Heart right ventricle (tissue), 16 donors: ENCODE measurements at regions of chr4 and their contacts with region 1.

Region 1: GRCh38 chr4:140427106-140427961 is at the start of gene CLGN:
- DNase-seq: peak; percentile 71 to 82
- ATAC-seq: peak; percentile 90 to 97 (median 95)
- H3K4me3 ChIP-seq: peak within 1 kb of the TSS; percentile 57 to 84 (median 73)
- H3K27ac ChIP-seq: peak within 1 kb of the TSS; percentile 53 to 91 (median 85)
- H3K4me1 ChIP-seq: peaks cover 0 to 22% (median 6%) of the 10 kb centered on the region in 9 donors
- H3K27me3 ChIP-seq: peaks cover 0 to 14% (median 3%) of the 10 kb centered on the region in 7 donors
- CTCF ChIP-seq: peak in 8 of 9 donors; percentile 43 to 70 (median 58)
- total RNA-seq, gene CLGN: 51.3 to 125 (median 71.6) TPM

Region 2: DNA sequence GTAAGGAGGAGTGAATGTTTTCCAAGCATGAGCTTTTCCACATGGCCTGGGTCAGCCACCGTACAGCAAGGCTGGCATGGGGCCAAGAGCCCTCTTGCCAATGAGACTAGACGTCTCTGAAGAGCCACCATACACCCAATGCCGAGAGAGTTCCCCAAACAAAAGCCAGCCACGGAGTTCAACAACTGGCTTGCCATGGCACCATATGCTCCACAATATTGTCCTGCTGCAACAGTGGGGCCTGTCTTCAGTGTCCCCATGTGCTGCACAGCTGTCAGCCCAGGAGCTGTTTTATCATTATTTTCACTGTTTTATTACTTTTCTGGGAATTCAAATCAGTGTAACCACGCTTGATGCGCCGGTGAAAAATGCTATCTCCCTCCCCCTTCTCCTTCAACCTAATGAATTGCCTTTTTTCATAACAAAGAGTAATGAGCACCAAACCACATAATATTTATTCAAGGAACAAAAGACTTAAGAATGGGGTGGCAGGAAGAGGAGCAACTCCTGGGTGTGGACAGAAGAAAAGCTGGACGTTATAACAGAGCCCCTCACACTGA is 291.7 kb before region 1 on chr4:
- intact Hi-C with region 1: no loop called
- DNase-seq: peak; percentile 29 to 63
- ATAC-seq: peak in 7 of 8 donors; percentile 48 to 80 (median 59)
- H3K4me3 ChIP-seq: no peak overlapping the region
- H3K27ac ChIP-seq: peak overlapping the region in 5 of 10 donors; percentile 7 to 44 (median 24)
- H3K4me1 ChIP-seq: peaks cover 0 to 26% (median 16%) of the 10 kb centered on the region in 9 donors
- H3K27me3 ChIP-seq: no peaks in the 10 kb centered on the region
- CTCF ChIP-seq: no peak

Region 3: DNA sequence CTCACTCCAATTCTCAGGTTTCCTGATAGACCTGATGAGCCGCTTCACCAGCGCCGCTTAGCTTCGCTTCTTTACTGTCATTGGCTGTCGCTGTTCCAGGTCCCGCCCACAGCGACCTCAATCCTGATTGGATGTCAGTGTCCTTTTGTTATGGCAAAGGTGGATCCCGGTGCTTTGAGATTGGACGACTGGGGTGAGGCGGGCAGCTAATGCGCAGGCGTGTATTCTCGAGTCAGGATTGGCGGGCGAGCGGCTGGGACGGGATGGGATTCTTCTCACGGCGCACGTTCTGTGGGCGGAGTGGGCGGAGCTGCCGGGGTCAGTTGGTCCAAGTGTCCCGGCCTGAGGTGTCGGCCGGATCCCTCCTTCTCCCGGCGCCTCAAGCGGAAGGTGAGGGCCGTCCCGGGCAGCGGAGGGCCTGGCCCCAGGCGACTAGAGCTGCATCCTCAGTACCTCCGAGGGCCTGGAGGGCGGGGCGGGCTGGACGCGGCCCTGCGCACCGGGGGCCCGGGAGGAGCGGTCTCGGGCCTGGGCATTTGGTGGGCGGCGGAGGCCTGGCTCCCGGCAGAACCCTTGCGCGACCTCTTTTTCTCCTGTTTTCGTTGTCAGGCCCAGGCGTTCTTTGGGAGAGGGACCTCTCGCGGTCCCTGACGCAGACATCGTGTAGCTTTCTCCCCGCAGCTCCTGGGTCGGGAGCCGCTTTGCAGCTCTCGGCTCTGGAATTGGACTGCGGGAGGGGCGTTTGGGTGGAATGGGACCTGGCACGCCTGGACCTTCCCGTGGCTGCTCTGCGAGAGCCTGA is 53.8 kb before region 1 on chr4 and contains the start of gene SCOC:
- intact Hi-C with region 1: loop called in 1 of 10 experiments (anchors 5 kb)
- DNase-seq: peak; percentile 98 to 99
- ATAC-seq: peak; percentile 98 to 100 (median 99)
- H3K4me3 ChIP-seq: peak within 1 kb of the TSS; percentile 72 to 96 (median 85)
- H3K27ac ChIP-seq: peak within 1 kb of the TSS; percentile 84 to 97 (median 94)
- H3K4me1 ChIP-seq: peaks cover 0 to 53% (median 42%) of the 10 kb centered on the region in 9 donors
- H3K27me3 ChIP-seq: no peaks in the 10 kb centered on the region
- CTCF ChIP-seq: no peak
- total RNA-seq, gene SCOC: 61.8 to 76.8 (median 67.0) TPM

Region 4: GRCh38 chr4:140388015-140388414 is 39.3 kb before region 1 on chr4:
- intact Hi-C with region 1: loop called in 1 of 10 experiments (anchors 5 kb)
- DNase-seq: no peak
- ATAC-seq: peak in 5 of 8 donors; percentile 45 to 84 (median 59)
- H3K4me3 ChIP-seq: no peak overlapping the region
- H3K27ac ChIP-seq: peak overlapping the region in 2 of 10 donors; percentile 4 to 6
- H3K4me1 ChIP-seq: peaks cover 0 to 11% (median 0%) of the 10 kb centered on the region in 9 donors
- H3K27me3 ChIP-seq: no peaks in the 10 kb centered on the region
- CTCF ChIP-seq: no peak

Region 5: DNA sequence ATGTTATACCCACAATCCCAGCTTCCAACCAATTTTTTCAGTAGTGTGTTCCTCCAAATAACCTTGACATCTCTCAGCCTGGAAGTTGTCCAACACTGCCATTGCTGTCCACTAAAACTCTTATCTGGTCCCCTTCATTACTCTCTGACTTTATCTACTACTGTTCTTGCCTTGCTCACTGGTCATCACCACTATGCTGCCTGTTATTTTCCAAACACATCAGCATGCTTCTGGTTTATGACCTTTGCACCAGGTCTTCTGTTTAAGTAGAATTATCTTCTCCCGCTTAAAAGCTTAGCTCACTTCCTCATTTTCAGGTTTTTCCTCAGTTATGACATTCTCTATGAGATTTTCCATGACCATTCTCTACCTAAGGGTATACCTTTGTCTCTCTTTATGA is 102.1 kb after region 1 on chr4:
- intact Hi-C with region 1: loop called in 4 of 10 experiments (anchors 5 to 10 kb)
- DNase-seq: peak in 1 of 2 donors; percentile 44
- ATAC-seq: peak in 7 of 8 donors; percentile 53 to 92 (median 84)
- H3K4me3 ChIP-seq: no peak overlapping the region
- H3K27ac ChIP-seq: peak overlapping the region in 9 of 10 donors; percentile 13 to 77 (median 62)
- H3K4me1 ChIP-seq: peaks cover 0 to 39% (median 13%) of the 10 kb centered on the region in 9 donors
- H3K27me3 ChIP-seq: no peaks in the 10 kb centered on the region
- CTCF ChIP-seq: no peak

Region 6: GRCh38 chr4:140609548-140610425 is 182.5 kb after region 1 on chr4:
- intact Hi-C with region 1: no loop called
- DNase-seq: no peak
- ATAC-seq: peak; percentile 74 to 90 (median 86)
- H3K4me3 ChIP-seq: peak overlapping the region in 1 of 10 donors; percentile 4
- H3K27ac ChIP-seq: peak overlapping the region in 8 of 10 donors; percentile 17 to 75 (median 39)
- H3K4me1 ChIP-seq: peaks cover 0 to 14% (median 4%) of the 10 kb centered on the region in 9 donors
- H3K27me3 ChIP-seq: no peaks in the 10 kb centered on the region
- CTCF ChIP-seq: peak; percentile 42 to 74 (median 62)